ENCODE measurements at regions of chr18 and their contacts with region 1.

Region 1: DNA sequence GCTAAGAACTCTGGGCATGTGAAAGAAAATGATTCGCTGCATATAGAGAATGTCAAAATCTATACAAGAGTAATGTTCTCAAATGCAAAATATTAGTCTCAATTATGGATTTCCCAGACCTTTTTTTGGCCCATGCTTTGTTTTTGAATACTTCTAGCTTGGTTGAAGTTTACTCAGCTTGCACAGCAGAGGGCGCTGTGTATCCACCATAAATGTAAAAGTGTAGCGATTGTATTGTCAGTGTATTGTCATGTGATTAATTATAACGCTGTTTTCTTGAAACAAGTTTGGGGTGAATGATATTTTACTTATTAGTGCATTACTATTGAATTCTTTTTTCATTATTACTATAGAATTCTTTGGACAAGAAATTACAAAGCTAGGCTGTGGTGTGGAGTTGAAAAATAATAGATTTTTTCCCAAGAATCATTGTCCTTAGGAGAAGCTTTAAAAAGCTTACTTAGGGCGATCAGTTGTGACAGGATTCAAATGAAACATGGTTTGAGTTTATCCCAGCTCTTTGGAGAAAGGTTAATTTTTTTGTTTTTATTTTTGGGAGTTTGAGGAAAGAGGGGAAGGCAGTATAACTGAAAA is 98.3 kb downstream of the PIK3C3 start:
- DNase-seq: peak; percentile 73
- H3K4me3 Mint-ChIP-seq: no peak overlapping the region
- H3K27ac Mint-ChIP-seq: no peak overlapping the region
- H3K4me1 Mint-ChIP-seq: peaks cover 4% of the 10 kb centered on the region
- H3K27me3 Mint-ChIP-seq: no peaks in the 10 kb centered on the region

Region 2: GRCh38 chr18:42028247-42028832 is 24.9 kb before region 1 on chr18:
- CTCF ChIA-PET with region 1: interaction called, 18 read pairs
- DNase-seq: peak; percentile 41
- H3K4me3 Mint-ChIP-seq: no peak overlapping the region
- H3K27ac Mint-ChIP-seq: no peak overlapping the region
- H3K4me1 Mint-ChIP-seq: peaks cover 31% of the 10 kb centered on the region
- H3K27me3 Mint-ChIP-seq: no peaks in the 10 kb centered on the region

Region 3: DNA sequence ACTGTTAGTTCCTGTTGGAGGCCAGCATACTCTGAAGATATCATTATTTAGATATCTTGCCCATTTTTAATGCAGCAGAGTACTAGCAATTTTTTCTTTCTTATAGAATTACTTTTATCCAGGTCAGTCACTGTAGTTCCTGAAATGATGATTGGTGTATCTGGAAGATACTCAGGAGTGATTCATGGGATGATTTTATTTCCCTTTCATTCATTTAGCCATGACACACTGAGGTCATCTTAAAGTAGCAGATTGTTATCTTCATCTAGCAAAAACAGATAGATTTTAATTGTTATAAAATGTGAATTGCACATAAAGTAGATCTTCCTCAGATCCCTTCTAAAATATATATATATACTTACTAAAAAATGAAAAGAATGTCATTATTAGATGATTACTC is 10.8 kb after region 1 on chr18:
- CTCF ChIA-PET with region 1: interaction called, 18 read pairs
- DNase-seq: no peak
- H3K4me3 Mint-ChIP-seq: no peak overlapping the region
- H3K27ac Mint-ChIP-seq: no peak overlapping the region
- H3K4me1 Mint-ChIP-seq: no peaks in the 10 kb centered on the region
- H3K27me3 Mint-ChIP-seq: no peaks in the 10 kb centered on the region

Measured in activated naive CD4-positive, alpha-beta T cell treated with anti-CD3 and anti-CD28 coated beads, Interleukin-2, amount 10 ng/mL, durations not matched to agents 7 days and 5 days (primary cell).